Sigmoid colon (tissue), 7 donors: ENCODE measurements at regions of chr12 and their contacts with region 1.

Region 1: DNA sequence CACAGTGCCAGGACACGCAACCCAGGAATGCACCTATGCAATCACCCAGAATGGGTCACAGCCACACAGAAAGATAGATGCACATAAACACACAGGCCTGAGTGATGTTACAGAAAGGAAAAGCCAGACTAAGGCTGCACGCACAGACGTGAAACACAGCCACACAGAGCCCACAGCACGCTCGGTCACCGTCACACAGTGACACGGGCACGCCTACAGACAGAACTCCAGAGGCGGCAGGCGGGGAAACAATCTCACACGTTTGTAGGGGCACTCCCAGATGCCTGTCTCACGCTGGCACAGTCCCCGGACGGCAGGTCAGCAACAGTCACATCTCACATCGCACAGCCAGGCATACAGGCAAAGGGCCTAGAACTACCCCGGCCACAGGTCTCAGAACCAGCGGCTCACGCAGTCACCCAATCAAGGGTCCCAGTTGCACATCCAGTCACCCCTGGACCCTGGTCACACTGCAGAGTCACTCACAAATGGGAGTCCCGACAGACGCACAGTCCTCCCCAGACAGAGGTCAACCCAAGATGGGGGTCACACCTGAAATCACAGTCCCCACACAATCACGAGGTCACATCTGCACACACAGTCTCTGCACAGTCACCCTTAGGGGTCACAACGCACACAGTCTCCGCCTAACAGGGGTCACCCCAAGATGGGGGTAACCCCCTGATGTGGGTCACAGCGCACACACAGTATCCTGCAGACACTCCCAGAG is 790 bp downstream of the SSH1 start:
- DNase-seq: peak; percentile 87
- H3K4me3 ChIP-seq: peak overlapping the region; percentile 63 to 84 (median 78)
- H3K27ac ChIP-seq: peak overlapping the region; percentile 91 to 99 (median 96)
- H3K4me1 ChIP-seq: peaks cover 0 to 63% (median 55%) of the 10 kb centered on the region in 4 donors
- H3K27me3 ChIP-seq: no peaks in the 10 kb centered on the region
- CTCF ChIP-seq: no peak
- EP300 ChIP-seq: no peak
- POLR2A ChIP-seq: peak in 1 of 2 donors; percentile 22

Region 2: DNA sequence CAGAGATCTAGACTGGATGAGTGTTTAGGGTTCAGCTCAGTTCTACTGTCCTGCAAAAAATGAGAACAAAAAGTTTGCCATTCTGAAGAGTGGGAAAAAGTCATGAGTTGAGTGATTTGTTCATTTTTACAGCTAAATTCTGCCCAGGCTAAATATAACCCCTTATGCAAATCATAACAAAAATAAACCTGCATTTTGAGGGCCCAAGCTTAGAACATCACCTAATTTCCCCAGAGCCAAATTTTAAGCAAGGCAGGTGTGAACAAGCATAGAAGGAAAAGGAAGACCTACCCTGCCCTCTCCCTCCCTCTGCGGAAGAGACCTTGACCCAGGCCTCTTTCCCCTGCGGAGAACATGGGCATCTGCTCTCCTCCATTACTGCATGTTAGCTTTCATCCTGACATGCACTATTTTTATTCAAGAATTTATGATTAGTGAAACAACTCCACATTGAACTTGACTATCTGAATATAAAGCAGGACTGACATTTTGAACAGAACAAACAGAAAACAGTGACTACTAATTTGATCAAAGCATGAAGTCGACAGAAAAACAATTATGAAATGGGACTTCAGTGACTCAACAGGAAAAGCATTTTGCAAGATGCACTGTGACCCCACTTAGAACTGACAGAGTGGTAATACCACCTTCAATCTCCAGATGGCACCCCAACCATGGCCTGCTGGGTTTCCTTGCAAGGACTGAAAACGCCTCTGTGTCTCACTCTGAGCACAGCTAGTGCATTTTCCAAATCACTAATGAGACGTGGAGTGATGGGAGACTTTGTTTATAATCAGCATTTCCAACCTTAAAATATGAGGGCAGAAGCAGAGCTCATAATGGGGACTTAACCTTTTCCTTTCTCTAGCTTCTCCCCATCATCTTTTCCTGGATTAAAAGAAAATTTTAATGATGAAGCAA is 192.0 kb before region 1 on chr12:
- intact Hi-C with region 1: loop called (anchors 1 kb)
- DNase-seq: peak; percentile 97
- H3K4me3 ChIP-seq: no peak overlapping the region
- H3K27ac ChIP-seq: peak overlapping the region; percentile 83 to 99 (median 86)
- H3K4me1 ChIP-seq: peaks cover 0 to 82% (median 80%) of the 10 kb centered on the region in 4 donors
- H3K27me3 ChIP-seq: no peaks in the 10 kb centered on the region
- CTCF ChIP-seq: peak; percentile 88 to 96 (median 92)
- EP300 ChIP-seq: peak in 1 of 4 donors; percentile 19
- POLR2A ChIP-seq: no peak

Region 3: GRCh38 chr12:108838194-108839017 is 18.2 kb before region 1 on chr12:
- intact Hi-C with region 1: no loop called
- DNase-seq: peak; percentile 92
- H3K4me3 ChIP-seq: no peak overlapping the region
- H3K27ac ChIP-seq: peak overlapping the region; percentile 67 to 94 (median 90)
- H3K4me1 ChIP-seq: peaks cover 0 to 75% (median 59%) of the 10 kb centered on the region in 4 donors
- H3K27me3 ChIP-seq: no peaks in the 10 kb centered on the region
- CTCF ChIP-seq: no peak
- EP300 ChIP-seq: peak in 2 of 4 donors; percentile 63 to 90
- POLR2A ChIP-seq: peak in 1 of 2 donors; percentile 14